MCF 10A (cell line): ENCODE measurements at regions of chr22 and their contacts with region 1.

Region 1: GRCh38 chr22:42959576-42960509 is 55.1 kb downstream of the PACSIN2 start:
- DNase-seq: peak; percentile 86
- H3K4me3 Mint-ChIP-seq: peak overlapping the region; percentile 79
- H3K27ac Mint-ChIP-seq: peak overlapping the region; percentile 80
- H3K4me1 Mint-ChIP-seq: peaks cover 61% of the 10 kb centered on the region
- H3K27me3 Mint-ChIP-seq: no peaks in the 10 kb centered on the region
- CTCF ChIP-seq: no peak

Region 2: GRCh38 chr22:42621505-42622002 is 338.3 kb before region 1 on chr22:
- CTCF ChIA-PET with region 1: no interaction called
- POLR2A ChIA-PET with region 1: no interaction called
- intact Hi-C with region 1: loop called (anchors 2 kb)
- DNase-seq: peak; percentile 76
- H3K4me3 Mint-ChIP-seq: peak overlapping the region; percentile 50
- H3K27ac Mint-ChIP-seq: peak overlapping the region; percentile 93
- H3K4me1 Mint-ChIP-seq: peaks cover 22% of the 10 kb centered on the region
- H3K27me3 Mint-ChIP-seq: no peaks in the 10 kb centered on the region
- CTCF ChIP-seq: peak; percentile 87

Region 3: DNA sequence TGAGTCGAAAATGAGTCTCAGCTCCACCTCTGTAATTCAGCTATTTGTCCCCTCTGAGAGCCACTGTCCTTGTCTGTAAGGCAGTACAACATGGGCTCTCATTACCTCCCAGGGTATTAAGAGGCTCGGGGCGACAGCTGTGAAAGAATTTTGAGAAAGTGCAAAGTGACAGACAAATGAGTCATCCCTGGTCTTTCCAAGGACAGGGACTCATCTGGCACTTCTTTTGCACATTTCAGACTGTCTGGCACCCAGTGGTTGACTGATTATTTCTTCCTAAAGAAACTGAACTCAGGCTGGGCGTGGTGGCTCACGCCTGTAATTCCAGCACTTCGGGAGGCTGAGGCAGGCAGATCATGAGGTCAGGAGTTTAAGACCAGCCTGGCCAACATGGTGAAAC is 40.6 kb before region 1 on chr22:
- CTCF ChIA-PET with region 1: interaction called, 3 read pairs
- POLR2A ChIA-PET with region 1: interaction called, 12 read pairs
- intact Hi-C with region 1: no loop called
- DNase-seq: peak; percentile 57
- H3K4me3 Mint-ChIP-seq: no peak overlapping the region
- H3K27ac Mint-ChIP-seq: peak overlapping the region; percentile 63
- H3K4me1 Mint-ChIP-seq: peaks cover 23% of the 10 kb centered on the region
- H3K27me3 Mint-ChIP-seq: no peaks in the 10 kb centered on the region
- CTCF ChIP-seq: no peak

Region 4: DNA sequence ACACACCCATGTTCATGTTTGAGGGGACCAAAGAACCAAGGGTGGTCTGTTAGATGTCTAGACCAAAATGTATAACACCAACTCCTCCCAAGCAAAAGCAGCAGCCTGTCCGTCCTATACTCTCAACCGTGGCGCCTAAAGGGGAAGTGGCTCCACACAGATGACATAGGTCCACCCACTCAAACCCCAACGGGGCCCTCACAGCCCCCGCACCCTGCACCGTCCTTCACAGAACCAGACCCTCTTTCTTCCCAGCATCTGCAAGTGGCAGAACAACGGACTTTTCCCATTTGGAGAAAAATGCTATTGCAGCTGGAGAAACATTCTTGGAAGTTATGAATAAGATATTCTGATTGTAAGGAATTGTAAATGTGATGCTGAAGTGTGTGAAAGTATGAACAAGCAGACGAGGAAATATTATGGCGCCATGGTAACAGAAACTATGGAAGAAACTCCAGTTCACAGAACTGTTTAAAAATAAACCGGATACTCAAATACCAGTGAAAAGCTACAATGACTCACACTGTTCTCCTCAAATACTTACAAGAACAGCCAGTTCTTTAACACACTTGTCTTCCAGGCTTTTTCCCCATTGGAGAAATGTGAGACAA is 26.3 kb before region 1 on chr22:
- CTCF ChIA-PET with region 1: interaction called, 3 read pairs
- POLR2A ChIA-PET with region 1: interaction called, 14 read pairs
- intact Hi-C with region 1: loop called (anchors 1 kb)
- DNase-seq: peak; percentile 78
- H3K4me3 Mint-ChIP-seq: peak overlapping the region; percentile 61
- H3K27ac Mint-ChIP-seq: peak overlapping the region; percentile 99
- H3K4me1 Mint-ChIP-seq: peaks cover 80% of the 10 kb centered on the region
- H3K27me3 Mint-ChIP-seq: no peaks in the 10 kb centered on the region
- CTCF ChIP-seq: no peak

Region 5: GRCh38 chr22:42939941-42940653 is 19.7 kb before region 1 on chr22:
- CTCF ChIA-PET with region 1: interaction called, 3 read pairs
- POLR2A ChIA-PET with region 1: interaction called, 14 read pairs
- intact Hi-C with region 1: loop called (anchors 1 kb)
- DNase-seq: peak; percentile 89
- H3K4me3 Mint-ChIP-seq: no peak overlapping the region
- H3K27ac Mint-ChIP-seq: peak overlapping the region; percentile 88
- H3K4me1 Mint-ChIP-seq: peaks cover 51% of the 10 kb centered on the region
- H3K27me3 Mint-ChIP-seq: no peaks in the 10 kb centered on the region
- CTCF ChIP-seq: no peak

Region 6: GRCh38 chr22:42947211-42947990 is 12.4 kb before region 1 on chr22:
- CTCF ChIA-PET with region 1: no interaction called
- POLR2A ChIA-PET with region 1: interaction called, 12 read pairs
- intact Hi-C with region 1: no loop called
- DNase-seq: peak; percentile 50
- H3K4me3 Mint-ChIP-seq: no peak overlapping the region
- H3K27ac Mint-ChIP-seq: peak overlapping the region; percentile 55
- H3K4me1 Mint-ChIP-seq: peaks cover 44% of the 10 kb centered on the region
- H3K27me3 Mint-ChIP-seq: no peaks in the 10 kb centered on the region
- CTCF ChIP-seq: no peak